T-cell (primary cell): ENCODE measurements at regions of chr6 and their contacts with region 1.

Region 1: GRCh38 chr6:73739096-73739495 is 43.1 kb downstream of the CD109 start:
- DNase-seq: peak in 2 of 35 experiments; percentile 0 to 80
- ATAC-seq: peak in 2 of 4 experiments; percentile 42 to 62
- H3K4me3 ChIP-seq: no peak overlapping the region
- H3K4me3 Mint-ChIP-seq: no peak overlapping the region
- H3K27ac ChIP-seq: no peak overlapping the region
- H3K27ac Mint-ChIP-seq: no peak overlapping the region
- H3K4me1 ChIP-seq: no peaks in the 10 kb centered on the region
- H3K4me1 Mint-ChIP-seq: no peaks in the 10 kb centered on the region
- H3K27me3 ChIP-seq: no peaks in the 10 kb centered on the region
- H3K27me3 Mint-ChIP-seq: no peaks in the 10 kb centered on the region

Region 2: GRCh38 chr6:72390548-72390947 is 1348.5 kb before region 1 on chr6:
- CTCF ChIA-PET with region 1: interaction called in 1 of 2 experiments, 12 read pairs
- POLR2A ChIA-PET with region 1: no interaction called
- DNase-seq: no peak
- ATAC-seq: no peak
- H3K4me3 ChIP-seq: no peak overlapping the region
- H3K4me3 Mint-ChIP-seq: no peak overlapping the region
- H3K27ac ChIP-seq: no peak overlapping the region
- H3K27ac Mint-ChIP-seq: no peak overlapping the region
- H3K4me1 ChIP-seq: no peaks in the 10 kb centered on the region
- H3K4me1 Mint-ChIP-seq: no peaks in the 10 kb centered on the region
- H3K27me3 ChIP-seq: no peaks in the 10 kb centered on the region
- H3K27me3 Mint-ChIP-seq: peaks cover 10 to 28% of the 10 kb centered on the region in 2 donors

Region 3: GRCh38 chr6:73548458-73549446 is 190.3 kb before region 1 on chr6:
- CTCF ChIA-PET with region 1: no interaction called
- POLR2A ChIA-PET with region 1: interaction called in 1 of 2 experiments, 10 read pairs
- DNase-seq: no peak
- ATAC-seq: no peak
- H3K4me3 ChIP-seq: no peak overlapping the region
- H3K4me3 Mint-ChIP-seq: no peak overlapping the region
- H3K27ac ChIP-seq: no peak overlapping the region
- H3K27ac Mint-ChIP-seq: no peak overlapping the region
- H3K4me1 ChIP-seq: no peaks in the 10 kb centered on the region
- H3K4me1 Mint-ChIP-seq: no peaks in the 10 kb centered on the region
- H3K27me3 ChIP-seq: peaks cover 0 to 2% of the 10 kb centered on the region in 2 experiments
- H3K27me3 Mint-ChIP-seq: no peaks in the 10 kb centered on the region

Region 4: GRCh38 chr6:73713410-73714147 is 25.5 kb before region 1 on chr6:
- CTCF ChIA-PET with region 1: interaction called in 1 of 2 experiments, 14 read pairs
- POLR2A ChIA-PET with region 1: no interaction called
- DNase-seq: no peak
- ATAC-seq: peak in 1 of 4 experiments; percentile 44
- H3K4me3 ChIP-seq: no peak overlapping the region
- H3K4me3 Mint-ChIP-seq: no peak overlapping the region
- H3K27ac ChIP-seq: no peak overlapping the region
- H3K27ac Mint-ChIP-seq: no peak overlapping the region
- H3K4me1 ChIP-seq: peaks cover 0 to 8% of the 10 kb centered on the region in 2 experiments
- H3K4me1 Mint-ChIP-seq: peaks cover 12 to 21% (median 13%) of the 10 kb centered on the region in 3 donors
- H3K27me3 ChIP-seq: no peaks in the 10 kb centered on the region
- H3K27me3 Mint-ChIP-seq: peaks cover 0 to 3% of the 10 kb centered on the region in 2 donors

Region 5: DNA sequence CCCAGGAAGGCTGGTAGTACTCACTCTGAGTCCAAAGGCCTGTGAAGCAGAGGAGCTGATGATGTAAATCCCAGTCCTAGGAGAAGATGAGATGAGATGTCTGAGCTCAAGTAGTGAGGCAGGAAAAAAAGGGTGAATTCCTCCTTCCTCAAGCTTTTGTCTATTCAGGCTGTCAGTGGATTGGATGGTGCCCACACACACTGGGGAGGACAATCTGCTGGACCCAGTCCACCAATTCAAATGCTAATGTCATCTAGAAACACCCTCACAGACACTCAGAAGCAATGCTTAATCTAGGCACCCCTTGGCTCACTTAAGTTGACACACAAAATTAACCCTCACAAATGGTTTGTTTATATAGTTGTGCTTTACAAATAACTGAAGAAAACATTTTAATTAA is 51.5 kb after region 1 on chr6:
- CTCF ChIA-PET with region 1: no interaction called
- POLR2A ChIA-PET with region 1: no interaction called
- DNase-seq: no peak
- ATAC-seq: no peak
- H3K4me3 ChIP-seq: no peak overlapping the region
- H3K4me3 Mint-ChIP-seq: no peak overlapping the region
- H3K27ac ChIP-seq: no peak overlapping the region
- H3K27ac Mint-ChIP-seq: no peak overlapping the region
- H3K4me1 ChIP-seq: no peaks in the 10 kb centered on the region
- H3K4me1 Mint-ChIP-seq: no peaks in the 10 kb centered on the region
- H3K27me3 ChIP-seq: no peaks in the 10 kb centered on the region
- H3K27me3 Mint-ChIP-seq: no peaks in the 10 kb centered on the region